ENCODE measurements at regions of chr2 and their contacts with region 1.

Region 1: DNA sequence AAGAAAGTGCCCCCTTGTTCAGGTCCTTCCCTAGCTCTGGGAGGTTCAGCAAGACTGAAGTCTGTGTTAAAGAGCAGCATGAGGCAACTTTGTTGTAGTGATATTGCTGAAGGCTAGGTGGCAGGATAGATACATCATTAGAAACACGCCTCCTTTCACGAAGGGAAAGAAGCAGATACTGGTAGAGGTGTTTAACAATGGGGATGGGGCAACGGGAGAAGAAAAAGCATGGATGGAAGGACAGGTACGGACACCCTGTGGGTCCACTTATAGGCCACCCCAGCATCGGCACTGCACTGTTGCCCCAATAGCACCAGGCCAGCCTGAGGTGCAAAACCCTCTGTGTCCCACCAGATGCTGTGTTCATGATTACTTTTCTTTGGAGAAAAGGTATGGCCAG is 3.5 kb upstream of the IGFBP5 start:
- DNase-seq: no peak
- H3K4me3 ChIP-seq: no peak overlapping the region
- H3K27ac ChIP-seq: peak overlapping the region; percentile 94
- H3K4me1 ChIP-seq: peaks cover 86% of the 10 kb centered on the region
- H3K27me3 ChIP-seq: peaks cover 8% of the 10 kb centered on the region
- CTCF ChIP-seq: peak; percentile 76

Region 2: DNA sequence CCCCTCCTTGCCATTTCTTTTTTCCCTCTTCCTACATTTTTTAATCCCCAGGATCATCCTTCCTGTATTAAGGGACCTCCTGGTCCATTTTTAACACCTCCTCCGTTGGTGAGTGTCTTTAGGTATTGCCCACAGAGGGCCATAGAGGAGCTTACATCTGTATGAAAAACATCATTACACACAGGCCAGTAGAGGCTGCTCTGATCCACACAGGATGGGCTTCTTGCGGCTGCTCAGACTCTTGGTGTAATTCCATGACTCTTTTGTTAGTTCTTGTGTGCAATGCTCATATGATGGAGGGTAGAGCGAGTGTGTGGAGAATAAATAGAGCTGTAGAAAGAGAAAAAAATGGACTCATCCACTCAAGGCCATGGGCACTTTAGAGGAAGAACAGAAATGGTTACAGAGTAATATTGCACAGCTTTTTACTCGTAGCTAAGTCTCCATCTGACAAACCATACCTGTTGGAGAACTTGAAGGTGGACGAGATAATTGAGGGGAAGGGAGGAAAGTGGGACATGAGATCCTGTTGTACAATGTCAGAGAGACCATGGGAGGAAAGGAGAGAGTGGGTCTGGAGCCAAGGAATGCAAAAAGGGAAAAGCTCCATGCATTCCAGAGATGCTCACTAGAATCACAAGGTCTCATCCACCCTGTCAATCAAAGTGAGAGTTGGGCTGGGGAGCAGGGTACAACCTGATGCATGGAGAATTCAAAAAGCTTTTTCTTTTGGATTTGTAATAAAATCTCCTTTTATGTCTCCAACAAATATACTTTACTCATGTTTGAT is 290.6 kb after region 1 on chr2:
- intact Hi-C with region 1: loop called (anchors 10 kb)
- DNase-seq: no peak
- H3K4me3 ChIP-seq: no peak overlapping the region
- H3K27ac ChIP-seq: no peak overlapping the region
- H3K4me1 ChIP-seq: peaks cover 38% of the 10 kb centered on the region
- H3K27me3 ChIP-seq: no peaks in the 10 kb centered on the region
- CTCF ChIP-seq: peak; percentile 27

Region 3: GRCh38 chr2:217074576-217075255 is 375.8 kb after region 1 on chr2:
- intact Hi-C with region 1: loop called (anchors 5 kb)
- DNase-seq: no peak
- H3K4me3 ChIP-seq: no peak overlapping the region
- H3K27ac ChIP-seq: peak overlapping the region; percentile 85
- H3K4me1 ChIP-seq: peaks cover 37% of the 10 kb centered on the region
- H3K27me3 ChIP-seq: no peaks in the 10 kb centered on the region
- CTCF ChIP-seq: no peak

Region 4: DNA sequence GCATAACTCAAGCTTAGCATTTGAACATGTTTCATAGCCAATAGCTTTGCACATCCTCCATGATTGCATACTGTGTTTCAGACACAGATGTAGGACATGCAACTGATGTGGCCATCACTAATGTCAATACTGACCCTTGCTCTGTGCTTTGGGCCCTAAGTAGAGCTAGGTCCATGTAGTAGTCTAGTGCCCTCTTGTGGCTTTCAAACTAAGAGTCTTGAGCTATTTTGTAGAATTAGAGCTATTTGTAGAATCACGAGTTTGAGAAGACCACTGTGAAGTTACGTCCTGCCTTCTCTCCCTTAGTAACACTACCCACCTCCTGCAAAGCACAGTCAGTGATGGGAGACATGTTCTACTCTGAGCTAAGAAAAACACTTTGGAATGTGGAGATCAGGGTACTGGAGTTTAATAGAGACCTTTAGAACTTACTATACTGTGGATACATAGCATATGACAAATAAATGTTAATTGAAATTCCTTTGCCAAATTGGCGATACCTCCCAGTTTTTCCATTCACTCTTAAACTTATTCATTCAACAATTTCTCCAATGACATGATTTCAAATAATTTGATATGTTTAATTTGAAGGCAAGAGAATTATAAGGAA is 467.5 kb after region 1 on chr2:
- intact Hi-C with region 1: loop called (anchors 5 kb)
- DNase-seq: no peak
- H3K4me3 ChIP-seq: no peak overlapping the region
- H3K27ac ChIP-seq: no peak overlapping the region
- H3K4me1 ChIP-seq: peaks cover 9% of the 10 kb centered on the region
- H3K27me3 ChIP-seq: no peaks in the 10 kb centered on the region
- CTCF ChIP-seq: peak; percentile 72

Measured in left ventricle myocardium inferior (tissue), 1 donor.